ENCODE measurements at regions of chr15 and their contacts with region 1.

Region 1: DNA sequence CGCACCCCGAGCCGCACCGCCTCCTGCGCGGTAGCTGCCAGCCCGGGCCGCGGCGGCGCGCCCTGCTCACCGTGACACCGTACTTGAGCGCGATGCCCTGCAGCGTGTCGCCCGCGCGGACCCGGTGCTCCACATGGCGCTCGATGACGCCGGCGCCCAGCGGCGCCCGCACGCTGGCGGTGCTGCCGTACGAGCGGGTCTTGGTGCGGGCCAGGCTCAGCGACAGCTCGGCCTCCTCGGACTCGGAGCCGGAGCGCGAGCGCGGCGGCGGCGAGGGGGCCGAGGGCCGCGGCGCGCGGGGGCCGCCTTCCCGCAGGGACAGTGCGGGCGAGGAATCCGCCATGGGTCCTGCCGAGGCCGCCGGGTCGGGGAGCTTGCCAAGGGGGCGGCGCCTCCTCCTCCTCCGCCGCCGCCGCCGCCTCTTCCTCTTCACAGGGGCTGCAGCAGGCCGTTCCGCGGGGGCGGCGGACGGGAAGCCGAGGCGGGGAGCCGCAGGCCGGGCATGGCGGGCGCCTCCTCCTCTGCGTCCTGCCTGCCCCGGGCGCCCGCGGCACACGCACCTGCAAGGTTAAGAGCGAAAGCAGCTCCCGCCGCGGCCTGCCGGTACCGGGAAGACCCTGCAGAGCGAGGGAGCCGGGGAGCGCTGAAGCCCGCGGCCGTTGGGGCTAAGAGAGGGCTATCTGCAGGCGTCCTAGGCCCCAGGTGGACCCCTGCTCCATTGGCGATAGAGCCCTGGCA is at the start of gene LYSMD2:
- DNase-seq: peak; percentile 89
- H3K4me3 ChIP-seq: peak within 1 kb of the TSS; percentile 63 to 95 (median 70)
- H3K27ac ChIP-seq: peak within 1 kb of the TSS; percentile 86 to 96 (median 91)
- H3K4me1 ChIP-seq: peaks cover 0 to 39% (median 24%) of the 10 kb centered on the region in 4 donors
- H3K27me3 ChIP-seq: no peaks in the 10 kb centered on the region
- CTCF ChIP-seq: no peak
- EP300 ChIP-seq: no peak
- POLR2A ChIP-seq: no peak
- total RNA-seq, gene LYSMD2: 15.3 to 28.5 (median 20.3) TPM

Region 2: DNA sequence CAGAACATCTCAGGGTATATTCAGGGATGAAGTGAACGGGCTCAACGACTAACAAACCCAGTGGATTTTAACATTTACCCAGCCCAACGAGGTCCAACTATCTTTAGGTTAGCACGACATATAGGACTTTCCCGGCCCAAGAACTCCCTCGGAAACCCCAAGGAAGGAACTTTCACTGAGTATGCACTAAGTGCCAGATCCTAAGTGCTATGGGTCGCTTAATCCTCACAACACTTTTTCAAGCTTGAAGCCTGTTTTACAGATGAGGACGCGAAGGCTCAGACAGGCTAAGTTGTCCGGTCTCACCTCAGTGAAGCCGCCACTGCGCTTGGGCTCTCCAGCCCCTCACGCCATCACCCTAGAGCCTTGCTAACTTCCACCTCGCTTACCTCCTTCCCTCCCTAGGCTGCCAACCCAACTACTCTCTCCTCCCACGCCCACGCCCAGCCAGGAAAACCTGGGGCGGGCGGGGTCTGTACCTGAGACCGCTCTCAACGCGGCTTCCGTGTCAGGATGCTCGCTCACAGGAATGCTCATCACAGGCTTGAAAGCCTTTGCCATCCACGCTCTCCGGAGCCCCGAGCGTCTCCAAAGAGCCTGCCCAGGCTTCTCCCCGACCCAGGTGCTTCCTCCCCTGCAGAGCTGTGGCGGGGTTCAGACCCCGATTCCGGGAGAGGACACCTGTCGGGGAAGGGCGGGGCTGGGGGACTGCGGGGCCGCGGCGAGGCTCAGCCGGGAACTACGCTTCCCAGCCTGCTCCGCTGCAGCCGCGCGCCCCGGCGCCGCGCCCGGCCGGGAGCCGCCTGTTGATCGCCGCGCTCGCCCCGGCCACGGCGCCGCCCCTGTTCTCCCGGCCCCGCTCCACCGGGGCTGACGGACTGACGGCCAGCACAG is 13.6 kb after region 1 on chr15 and contains the start of gene TMOD2:
- intact Hi-C with region 1: loop called (anchors 2 kb)
- DNase-seq: peak; percentile 72
- H3K4me3 ChIP-seq: peak within 1 kb of the TSS; percentile 60 to 96 (median 81)
- H3K27ac ChIP-seq: peak within 1 kb of the TSS; percentile 76 to 85 (median 84)
- H3K4me1 ChIP-seq: peaks cover 0 to 28% (median 10%) of the 10 kb centered on the region in 4 donors
- H3K27me3 ChIP-seq: no peaks in the 10 kb centered on the region
- CTCF ChIP-seq: no peak
- EP300 ChIP-seq: no peak
- POLR2A ChIP-seq: no peak
- total RNA-seq, gene TMOD2: 18.1 to 32.5 (median 22.7) TPM

Region 3: DNA sequence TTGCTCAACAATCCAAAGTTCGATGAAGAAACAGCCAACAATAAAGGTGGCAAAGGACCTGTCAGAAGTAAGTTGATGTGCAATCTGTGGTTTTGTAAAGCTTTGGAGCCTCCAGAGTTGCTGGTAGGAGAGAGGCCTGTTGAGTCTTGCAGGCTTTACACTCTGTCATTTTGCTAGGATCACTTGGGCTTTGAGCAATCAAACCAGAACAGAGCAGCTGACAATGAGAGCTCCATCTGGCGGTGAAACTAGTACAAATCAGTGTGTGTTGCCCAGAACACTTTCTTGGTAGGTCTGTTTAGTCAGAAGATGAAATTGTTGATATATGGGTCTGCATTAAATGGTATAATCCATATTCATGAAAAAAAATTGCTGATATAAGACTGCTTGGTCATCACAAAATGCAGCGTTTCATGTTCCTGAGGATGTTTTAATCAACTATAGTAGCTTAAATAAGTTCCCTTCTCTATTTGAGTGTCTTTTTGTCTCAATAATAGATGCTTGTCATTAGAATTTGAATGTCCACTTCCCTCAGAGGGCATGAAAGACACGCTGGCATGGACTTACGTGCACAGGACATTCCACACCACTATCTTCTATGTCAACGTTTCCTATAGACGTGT is 39.6 kb after region 1 on chr15:
- intact Hi-C with region 1: loop called (anchors 5 kb)
- DNase-seq: peak; percentile 80
- H3K4me3 ChIP-seq: no peak overlapping the region
- H3K27ac ChIP-seq: no peak overlapping the region
- H3K4me1 ChIP-seq: peaks cover 0 to 10% (median 2%) of the 10 kb centered on the region in 4 donors
- H3K27me3 ChIP-seq: no peaks in the 10 kb centered on the region
- CTCF ChIP-seq: peak; percentile 34 to 70 (median 58)
- EP300 ChIP-seq: no peak
- POLR2A ChIP-seq: no peak

Region 4: DNA sequence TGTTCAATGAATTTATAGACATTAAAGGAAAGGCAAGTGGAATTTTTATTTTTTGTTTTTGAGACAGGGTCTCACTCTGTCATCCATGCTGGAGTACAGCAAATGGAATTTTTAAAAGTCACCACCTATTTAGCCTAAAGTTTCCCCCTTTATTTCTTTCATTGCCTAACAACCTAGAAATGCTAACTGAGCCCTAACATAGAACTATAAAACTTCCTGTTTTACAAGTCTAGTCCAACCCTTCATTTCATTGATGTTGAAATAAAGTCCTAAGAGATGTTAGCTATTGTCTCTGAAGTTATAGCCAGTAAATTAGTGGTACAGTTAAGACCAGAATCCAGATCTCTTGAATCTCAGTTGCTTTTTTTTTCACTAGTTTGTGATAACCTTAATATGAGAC is 320.5 kb after region 1 on chr15:
- intact Hi-C with region 1: no loop called
- DNase-seq: no peak
- H3K4me3 ChIP-seq: no peak overlapping the region
- H3K27ac ChIP-seq: no peak overlapping the region
- H3K4me1 ChIP-seq: no peaks in the 10 kb centered on the region
- H3K27me3 ChIP-seq: no peaks in the 10 kb centered on the region
- CTCF ChIP-seq: no peak
- EP300 ChIP-seq: no peak
- POLR2A ChIP-seq: no peak

Measured in sigmoid colon (tissue), 7 donors.